ENCODE measurements at regions of chr6 and their contacts with region 1.

Region 1: GRCh38 chr6:134640975-134641429 is 308.9 kb downstream of the ALDH8A1 start:
- DNase-seq: peak; percentile 85
- H3K4me3 Mint-ChIP-seq: no peak overlapping the region
- H3K27ac Mint-ChIP-seq: no peak overlapping the region
- H3K4me1 Mint-ChIP-seq: peaks cover 32% of the 10 kb centered on the region
- H3K27me3 Mint-ChIP-seq: no peaks in the 10 kb centered on the region

Region 2: GRCh38 chr6:134161036-134161435 is 480.0 kb before region 1 on chr6:
- CTCF ChIA-PET with region 1: interaction called, 11 read pairs
- POLR2A ChIA-PET with region 1: no interaction called
- intact Hi-C with region 1: loop called (anchors 1 kb)
- DNase-seq: no peak
- H3K4me3 Mint-ChIP-seq: no peak overlapping the region
- H3K27ac Mint-ChIP-seq: no peak overlapping the region
- H3K4me1 Mint-ChIP-seq: peaks cover 4% of the 10 kb centered on the region
- H3K27me3 Mint-ChIP-seq: no peaks in the 10 kb centered on the region

Region 3: GRCh38 chr6:134345772-134346171 is 295.2 kb before region 1 on chr6:
- CTCF ChIA-PET with region 1: no interaction called
- POLR2A ChIA-PET with region 1: no interaction called
- intact Hi-C with region 1: no loop called
- DNase-seq: no peak
- H3K4me3 Mint-ChIP-seq: no peak overlapping the region
- H3K27ac Mint-ChIP-seq: no peak overlapping the region
- H3K4me1 Mint-ChIP-seq: no peaks in the 10 kb centered on the region
- H3K27me3 Mint-ChIP-seq: no peaks in the 10 kb centered on the region

Region 4: GRCh38 chr6:134373282-134373922 is 267.6 kb before region 1 on chr6:
- CTCF ChIA-PET with region 1: interaction called, 3 read pairs
- POLR2A ChIA-PET with region 1: no interaction called
- intact Hi-C with region 1: loop called (anchors 10 kb)
- DNase-seq: peak; percentile 43
- H3K4me3 Mint-ChIP-seq: no peak overlapping the region
- H3K27ac Mint-ChIP-seq: no peak overlapping the region
- H3K4me1 Mint-ChIP-seq: peaks cover 30% of the 10 kb centered on the region
- H3K27me3 Mint-ChIP-seq: no peaks in the 10 kb centered on the region

Region 5: GRCh38 chr6:134628154-134628553 is 12.8 kb before region 1 on chr6:
- CTCF ChIA-PET with region 1: interaction called, 21 read pairs
- POLR2A ChIA-PET with region 1: no interaction called
- intact Hi-C with region 1: no loop called
- DNase-seq: no peak
- H3K4me3 Mint-ChIP-seq: no peak overlapping the region
- H3K27ac Mint-ChIP-seq: no peak overlapping the region
- H3K4me1 Mint-ChIP-seq: peaks cover 10% of the 10 kb centered on the region
- H3K27me3 Mint-ChIP-seq: no peaks in the 10 kb centered on the region

Region 6: DNA sequence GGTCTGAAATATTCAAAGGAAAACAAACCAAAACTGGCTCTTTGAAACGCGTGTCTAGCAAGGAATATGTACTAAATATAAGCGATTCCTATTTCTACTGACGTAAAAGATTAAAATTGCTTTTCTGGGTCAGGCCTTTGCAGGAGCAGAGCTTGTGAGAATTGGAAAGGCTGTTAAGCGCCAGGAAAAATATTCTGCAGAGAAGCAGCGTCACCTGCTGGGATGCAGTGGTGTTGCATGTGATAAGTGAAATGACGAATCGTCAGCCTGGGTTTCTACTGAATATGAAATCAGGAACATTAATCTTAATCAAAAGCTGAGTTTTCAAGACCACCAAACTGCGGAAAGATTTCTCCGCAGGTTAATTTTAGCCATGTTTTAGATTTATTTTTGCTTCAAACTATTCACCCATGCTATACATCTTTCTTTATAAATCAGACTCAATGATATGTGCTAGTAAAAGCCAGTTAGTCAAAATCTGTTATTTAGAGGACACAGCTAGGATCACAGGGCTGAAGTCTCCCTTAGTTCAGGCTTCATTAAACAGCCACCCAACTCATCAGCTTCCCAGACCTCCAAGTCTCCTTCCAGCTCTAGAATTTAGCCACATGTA is 241.5 kb after region 1 on chr6:
- CTCF ChIA-PET with region 1: interaction called, 5 read pairs
- POLR2A ChIA-PET with region 1: no interaction called
- intact Hi-C with region 1: loop called (anchors 5 kb)
- DNase-seq: peak; percentile 74
- H3K4me3 Mint-ChIP-seq: no peak overlapping the region
- H3K27ac Mint-ChIP-seq: no peak overlapping the region
- H3K4me1 Mint-ChIP-seq: no peaks in the 10 kb centered on the region
- H3K27me3 Mint-ChIP-seq: peaks cover 18% of the 10 kb centered on the region

Region 7: GRCh38 chr6:135233686-135234489 is 592.9 kb after region 1 on chr6:
- CTCF ChIA-PET with region 1: no interaction called
- POLR2A ChIA-PET with region 1: no interaction called
- intact Hi-C with region 1: no loop called
- DNase-seq: no peak
- H3K4me3 Mint-ChIP-seq: no peak overlapping the region
- H3K27ac Mint-ChIP-seq: no peak overlapping the region
- H3K4me1 Mint-ChIP-seq: peaks cover 20% of the 10 kb centered on the region
- H3K27me3 Mint-ChIP-seq: no peaks in the 10 kb centered on the region

Region 8: GRCh38 chr6:135488023-135488422 is 847.0 kb after region 1 on chr6:
- CTCF ChIA-PET with region 1: no interaction called
- POLR2A ChIA-PET with region 1: no interaction called
- intact Hi-C with region 1: no loop called
- DNase-seq: no peak
- H3K4me3 Mint-ChIP-seq: no peak overlapping the region
- H3K27ac Mint-ChIP-seq: no peak overlapping the region
- H3K4me1 Mint-ChIP-seq: no peaks in the 10 kb centered on the region
- H3K27me3 Mint-ChIP-seq: no peaks in the 10 kb centered on the region

Measured in activated CD4-positive, alpha-beta memory T cell treated with anti-CD3 and anti-CD28 coated beads for 36 hours (primary cell).